ENCODE measurements at regions of chr3 and their contacts with region 1.

Region 1: GRCh38 chr3:183385698-183386613 is 42.5 kb downstream of the MCF2L2 start:
- DNase-seq: no peak
- ATAC-seq: peak; percentile 75

Region 2: DNA sequence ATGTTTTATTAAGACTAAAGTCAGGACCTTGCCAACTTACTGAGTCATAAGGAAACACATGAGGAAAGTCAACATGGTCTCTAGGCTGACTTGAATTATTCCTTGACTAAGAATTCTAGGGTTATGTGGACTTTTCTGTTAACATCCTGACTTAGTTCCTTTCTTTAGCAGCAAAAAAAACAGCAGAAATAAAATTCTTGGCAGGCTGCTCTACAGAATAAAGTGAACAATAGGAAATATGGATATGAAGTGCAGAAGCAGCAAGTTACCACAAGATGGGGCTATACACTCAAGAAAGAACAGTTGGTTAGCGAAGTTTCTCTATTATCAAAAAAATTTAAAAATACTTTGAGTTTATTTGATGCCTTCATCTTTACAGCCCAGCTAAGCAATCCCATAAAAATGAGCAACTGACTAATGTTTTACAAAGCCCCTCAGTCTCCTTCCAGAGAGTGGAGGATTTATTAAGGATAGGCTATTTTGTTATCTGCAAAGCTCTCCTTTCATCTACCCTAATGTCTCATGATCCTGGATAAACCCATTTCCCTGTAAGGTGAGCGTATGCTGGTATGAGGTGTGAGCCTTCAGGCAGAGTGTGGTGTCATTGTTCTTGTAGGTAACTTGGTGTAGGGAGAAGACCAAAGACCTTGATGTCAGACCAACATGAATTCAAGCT is 263.6 kb before region 1 on chr3:
- intact Hi-C with region 1: loop called (anchors 1 kb)
- DNase-seq: no peak
- ATAC-seq: no peak

Region 3: DNA sequence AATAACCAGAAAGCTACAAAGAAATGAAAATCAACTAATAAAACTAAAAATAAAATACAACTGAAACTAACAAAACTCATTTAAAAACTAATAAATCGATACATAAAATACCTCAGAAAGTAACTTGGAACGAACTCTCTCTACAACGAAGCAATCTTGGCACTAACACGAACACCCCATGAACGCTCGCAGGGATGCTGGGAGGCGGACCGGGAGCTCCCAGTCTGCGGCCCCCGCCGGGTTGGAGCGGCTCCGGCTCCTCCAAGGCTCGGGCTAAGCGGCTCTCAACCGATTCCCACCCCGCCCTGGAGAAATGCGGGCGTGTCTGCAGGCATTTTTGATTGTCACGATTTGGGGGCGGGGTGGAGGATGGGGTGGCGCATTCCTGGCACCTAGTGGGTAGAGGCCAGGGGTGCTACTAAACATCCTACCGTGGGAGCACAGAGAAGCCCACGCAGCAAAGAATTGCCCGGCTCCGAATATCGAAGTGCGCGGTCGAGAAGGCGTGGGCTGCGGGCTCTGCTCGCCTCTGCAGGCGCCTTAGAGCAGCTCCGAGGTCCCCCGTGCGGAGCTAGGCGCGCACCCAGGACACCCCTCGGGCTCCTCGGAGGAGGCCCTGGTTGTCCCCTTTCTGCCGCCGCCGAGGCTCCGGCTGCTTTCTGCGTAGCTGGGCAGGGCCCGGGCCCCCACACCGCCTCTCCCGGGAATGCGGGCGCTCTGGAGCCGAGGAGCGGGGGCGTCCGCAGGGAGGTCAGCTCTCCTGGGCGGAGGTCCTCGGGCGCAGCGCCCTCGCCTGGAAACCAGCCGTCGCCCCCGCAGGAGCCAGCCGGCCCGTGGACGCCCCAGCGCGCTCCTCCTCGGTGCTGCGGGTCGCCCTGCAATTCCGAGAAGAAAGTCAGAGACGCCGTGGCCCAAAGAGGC is 207.1 kb before region 1 on chr3:
- intact Hi-C with region 1: loop called (anchors 1 kb)
- DNase-seq: peak; percentile 69
- ATAC-seq: peak; percentile 57

Region 4: GRCh38 chr3:183253902-183254833 is 131.8 kb before region 1 on chr3:
- intact Hi-C with region 1: loop called (anchors 2 kb)
- DNase-seq: peak; percentile 82
- ATAC-seq: peak; percentile 76

Region 5: GRCh38 chr3:183449391-183449790 is 63.4 kb after region 1 on chr3:
- intact Hi-C with region 1: no loop called
- DNase-seq: no peak
- ATAC-seq: peak; percentile 38

Region 6: DNA sequence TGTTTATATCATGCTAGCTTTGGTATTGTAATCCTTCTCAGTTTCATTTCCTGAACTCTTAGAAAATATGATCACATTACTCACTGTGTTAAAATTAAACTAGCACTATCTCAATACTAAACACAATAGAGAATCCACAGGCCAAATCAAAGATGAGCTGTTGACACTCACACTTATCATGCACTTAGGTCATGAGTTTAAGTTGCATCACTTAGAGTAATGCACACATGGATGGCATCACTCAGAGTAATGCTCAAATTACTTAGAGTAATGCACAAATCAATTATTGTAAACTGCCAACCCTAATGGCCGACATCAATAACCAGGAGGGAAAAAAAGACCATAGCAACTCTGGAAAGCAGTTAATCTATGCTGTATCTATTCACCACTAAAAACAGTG is 82.5 kb after region 1 on chr3:
- intact Hi-C with region 1: no loop called
- DNase-seq: no peak
- ATAC-seq: no peak

Measured in Right ventricle myocardium inferior (tissue), 1 donor.